MCF 10A (cell line): ENCODE measurements at regions of chr7 and their contacts with region 1.

Region 1: GRCh38 chr7:98372993-98373392 is 27.9 kb downstream of the BAIAP2L1 start:
- DNase-seq: peak; percentile 84
- H3K4me3 Mint-ChIP-seq: peak overlapping the region; percentile 19
- H3K27ac Mint-ChIP-seq: peak overlapping the region; percentile 79
- H3K4me1 Mint-ChIP-seq: peaks cover 19% of the 10 kb centered on the region
- H3K27me3 Mint-ChIP-seq: no peaks in the 10 kb centered on the region
- CTCF ChIP-seq: no peak

Region 2: GRCh38 chr7:98354511-98355257 is 18.3 kb before region 1 on chr7:
- CTCF ChIA-PET with region 1: interaction called, 9 read pairs
- POLR2A ChIA-PET with region 1: interaction called, 24 read pairs
- intact Hi-C with region 1: loop called (anchors 1 kb)
- DNase-seq: peak; percentile 96
- H3K4me3 Mint-ChIP-seq: peak overlapping the region; percentile 57
- H3K27ac Mint-ChIP-seq: peak overlapping the region; percentile 94
- H3K4me1 Mint-ChIP-seq: peaks cover 40% of the 10 kb centered on the region
- H3K27me3 Mint-ChIP-seq: no peaks in the 10 kb centered on the region
- CTCF ChIP-seq: no peak

Region 3: GRCh38 chr7:98360221-98361124 is 12.5 kb before region 1 on chr7:
- CTCF ChIA-PET with region 1: interaction called, 10 read pairs
- POLR2A ChIA-PET with region 1: interaction called, 24 read pairs
- intact Hi-C with region 1: no loop called
- DNase-seq: no peak
- H3K4me3 Mint-ChIP-seq: no peak overlapping the region
- H3K27ac Mint-ChIP-seq: no peak overlapping the region
- H3K4me1 Mint-ChIP-seq: peaks cover 16% of the 10 kb centered on the region
- H3K27me3 Mint-ChIP-seq: no peaks in the 10 kb centered on the region
- CTCF ChIP-seq: no peak

Region 4: DNA sequence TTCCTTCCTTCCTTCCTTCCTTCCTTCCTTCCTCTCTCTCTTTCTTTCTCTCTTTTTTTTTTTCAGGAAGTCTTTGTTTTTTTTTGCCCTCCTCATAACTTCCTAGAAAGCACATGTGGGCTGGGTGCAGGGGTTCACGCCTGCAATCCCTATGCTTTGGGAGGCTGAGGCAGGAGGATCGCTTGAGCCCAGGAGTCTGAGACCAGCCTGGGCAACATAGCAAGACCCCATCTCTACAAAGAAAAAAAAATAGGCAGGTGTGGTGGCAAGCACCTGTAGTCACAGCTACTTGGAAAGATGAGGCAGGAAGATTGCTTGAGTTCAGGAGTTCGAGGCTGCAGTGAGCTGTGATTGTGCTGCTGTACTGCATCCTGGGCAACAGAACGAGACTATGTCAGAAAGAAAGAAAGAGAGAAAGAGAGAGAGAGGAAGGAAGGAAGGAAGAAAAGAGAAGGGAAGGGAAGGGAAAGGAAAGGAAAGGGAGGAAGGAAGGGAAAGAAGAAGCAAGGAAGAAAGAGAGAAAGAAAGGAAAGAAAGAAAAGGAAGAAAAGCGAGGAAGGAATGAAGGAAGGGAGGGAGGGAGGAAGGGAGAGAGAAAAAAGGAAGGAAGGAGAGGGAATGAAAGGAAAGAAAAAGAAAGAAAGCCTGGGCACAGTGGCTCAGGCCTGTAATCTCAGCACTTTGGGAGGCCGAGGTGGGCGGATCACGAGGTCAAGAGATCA is 41.4 kb after region 1 on chr7:
- CTCF ChIA-PET with region 1: no interaction called
- POLR2A ChIA-PET with region 1: no interaction called
- intact Hi-C with region 1: no loop called
- DNase-seq: no peak
- H3K4me3 Mint-ChIP-seq: no peak overlapping the region
- H3K27ac Mint-ChIP-seq: no peak overlapping the region
- H3K4me1 Mint-ChIP-seq: peaks cover 16% of the 10 kb centered on the region
- H3K27me3 Mint-ChIP-seq: no peaks in the 10 kb centered on the region
- CTCF ChIP-seq: no peak

Region 5: GRCh38 chr7:98483276-98483965 is 110.4 kb after region 1 on chr7:
- CTCF ChIA-PET with region 1: no interaction called
- POLR2A ChIA-PET with region 1: no interaction called
- intact Hi-C with region 1: no loop called
- DNase-seq: no peak
- H3K4me3 Mint-ChIP-seq: no peak overlapping the region
- H3K27ac Mint-ChIP-seq: no peak overlapping the region
- H3K4me1 Mint-ChIP-seq: no peaks in the 10 kb centered on the region
- H3K27me3 Mint-ChIP-seq: peaks cover 8% of the 10 kb centered on the region
- CTCF ChIP-seq: no peak